ENCODE measurements at regions of chr19 and their contacts with region 1.

Region 1: GRCh38 chr19:34096020-34096915 is 76.0 kb upstream of the LSM14A start:
- DNase-seq: peak; percentile 78 to 79
- ATAC-seq: peak; percentile 78 to 91
- H3K4me3 ChIP-seq: no peak overlapping the region; the same call in 2 of the 3 replicates
- H3K27ac ChIP-seq: no peak overlapping the region
- H3K4me1 ChIP-seq: no peaks in the 10 kb centered on the region
- CTCF ChIP-seq: peak; percentile 99
- EP300 ChIP-seq: no peak
- POLR2A ChIP-seq: no peak
- RAD21 ChIP-seq: peak; percentile 97

Region 2: GRCh38 chr19:33771384-33772101 is 324.7 kb before region 1 on chr19:
- CTCF ChIA-PET with region 1: interaction called, 510 read pairs
- POLR2A ChIA-PET with region 1: no interaction called
- DNase-seq: peak; percentile 80 to 94
- ATAC-seq: peak; percentile 54 to 91
- H3K4me3 ChIP-seq: no peak overlapping the region
- H3K27ac ChIP-seq: no peak overlapping the region
- H3K4me1 ChIP-seq: no peaks in the 10 kb centered on the region
- CTCF ChIP-seq: peak; percentile 98
- EP300 ChIP-seq: no peak
- POLR2A ChIP-seq: no peak
- RAD21 ChIP-seq: peak; percentile 99 to 100

Region 3: GRCh38 chr19:33819880-33820781 is 276.1 kb before region 1 on chr19:
- CTCF ChIA-PET with region 1: interaction called, 16 read pairs
- POLR2A ChIA-PET with region 1: no interaction called
- DNase-seq: peak; percentile 76 to 93
- ATAC-seq: peak; percentile 90 to 92
- H3K4me3 ChIP-seq: peak overlapping the region; percentile 35
- H3K27ac ChIP-seq: peak overlapping the region; percentile 67 to 84
- H3K4me1 ChIP-seq: peaks cover 24% of the 10 kb centered on the region
- CTCF ChIP-seq: peak; percentile 13; the same call in 1 of the 3 replicates
- EP300 ChIP-seq: no peak
- POLR2A ChIP-seq: no peak
- RAD21 ChIP-seq: peak in 1 of 2 experiments; percentile 26; a peak in 1 of 5 replicates

Region 4: DNA sequence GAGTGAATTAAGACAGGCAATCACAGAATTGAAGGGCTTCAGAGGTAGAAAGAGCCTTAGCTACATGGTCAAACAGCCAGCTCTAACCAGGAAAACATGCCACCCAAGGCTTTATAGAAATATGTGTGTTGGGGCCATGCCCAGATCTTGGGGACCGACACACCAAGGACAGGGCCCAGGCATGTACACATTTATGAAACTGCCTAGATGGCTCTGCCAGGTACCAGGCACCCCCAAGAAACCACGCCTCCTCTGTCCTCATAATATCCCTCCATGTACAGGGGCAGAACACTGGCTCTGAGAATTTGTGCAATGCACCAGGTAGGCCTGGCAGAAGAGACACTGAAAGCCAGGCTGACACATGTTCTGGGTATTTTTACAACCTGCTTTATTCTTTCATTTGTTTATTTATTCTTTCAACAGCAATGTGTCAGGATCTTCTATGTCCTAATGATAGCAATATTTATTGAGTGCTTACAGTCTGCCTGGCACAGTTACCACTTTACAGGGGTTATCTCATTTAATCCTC is 61.9 kb before region 1 on chr19:
- CTCF ChIA-PET with region 1: interaction called, 30 read pairs
- POLR2A ChIA-PET with region 1: no interaction called
- DNase-seq: no peak
- ATAC-seq: peak; percentile 22 to 23; a peak in 2 of 6 replicates
- H3K4me3 ChIP-seq: no peak overlapping the region
- H3K27ac ChIP-seq: no peak overlapping the region
- H3K4me1 ChIP-seq: peaks cover 3% of the 10 kb centered on the region; the same call in 1 of the 3 replicates
- CTCF ChIP-seq: no peak
- EP300 ChIP-seq: no peak
- POLR2A ChIP-seq: no peak
- RAD21 ChIP-seq: no peak

Region 5: GRCh38 chr19:34067861-34068271 is 28.4 kb before region 1 on chr19:
- CTCF ChIA-PET with region 1: interaction called, 17 read pairs
- POLR2A ChIA-PET with region 1: no interaction called
- DNase-seq: peak; percentile 78 to 89
- ATAC-seq: peak; percentile 88 to 89
- H3K4me3 ChIP-seq: peak overlapping the region; percentile 1; the same call in 1 of the 3 replicates
- H3K27ac ChIP-seq: peak overlapping the region in 1 of 2 experiments; percentile 62; a peak in 3 of 6 replicates
- H3K4me1 ChIP-seq: peaks cover 18% of the 10 kb centered on the region
- CTCF ChIP-seq: no peak
- EP300 ChIP-seq: peak in 1 of 2 experiments; percentile 59; a peak in 1 of 5 replicates
- POLR2A ChIP-seq: no peak
- RAD21 ChIP-seq: no peak

Region 6: DNA sequence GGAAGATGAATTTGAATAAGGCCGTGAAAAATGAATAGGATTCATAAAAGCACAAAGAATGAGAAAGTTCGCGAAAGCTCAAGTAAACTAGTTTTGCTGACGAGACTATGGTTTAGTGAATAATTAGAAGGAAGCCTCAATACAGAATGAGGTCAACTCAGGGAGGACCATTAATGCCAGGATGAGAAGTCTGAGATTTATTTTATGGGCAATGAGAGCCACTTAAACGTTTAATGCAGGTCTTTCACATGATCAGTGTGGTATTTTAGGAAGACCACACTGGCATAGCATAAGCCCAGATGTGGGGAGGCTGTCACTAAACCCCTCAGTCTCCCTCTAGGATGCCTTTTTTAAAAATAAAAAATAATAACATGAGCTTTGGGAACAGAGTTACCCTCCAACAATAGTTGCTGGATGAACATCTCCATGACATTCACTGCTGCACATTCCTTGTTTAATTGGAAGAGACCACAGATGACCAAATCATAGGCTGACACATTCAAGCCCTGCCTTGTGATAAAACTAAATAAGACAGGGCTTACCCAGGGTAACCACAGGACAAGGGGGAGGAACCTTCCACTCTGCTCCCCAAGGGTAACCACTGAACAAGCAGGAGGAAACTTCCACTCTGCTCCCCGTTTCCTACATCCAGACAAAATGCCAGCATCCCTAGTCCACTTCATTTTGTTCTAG is 32.4 kb after region 1 on chr19:
- CTCF ChIA-PET with region 1: interaction called, 113 read pairs
- POLR2A ChIA-PET with region 1: interaction called, 3 read pairs
- DNase-seq: no peak
- ATAC-seq: peak in 1 of 2 experiments; percentile 38; a peak in 1 of 6 replicates
- H3K4me3 ChIP-seq: no peak overlapping the region
- H3K27ac ChIP-seq: no peak overlapping the region
- H3K4me1 ChIP-seq: peaks cover 2% of the 10 kb centered on the region; the same call in 1 of the 3 replicates
- CTCF ChIP-seq: no peak
- EP300 ChIP-seq: no peak
- POLR2A ChIP-seq: no peak
- RAD21 ChIP-seq: no peak

Measured in A549 (cell line).